ENCODE measurements at regions of chr18 and their contacts with region 1.

Region 1: DNA sequence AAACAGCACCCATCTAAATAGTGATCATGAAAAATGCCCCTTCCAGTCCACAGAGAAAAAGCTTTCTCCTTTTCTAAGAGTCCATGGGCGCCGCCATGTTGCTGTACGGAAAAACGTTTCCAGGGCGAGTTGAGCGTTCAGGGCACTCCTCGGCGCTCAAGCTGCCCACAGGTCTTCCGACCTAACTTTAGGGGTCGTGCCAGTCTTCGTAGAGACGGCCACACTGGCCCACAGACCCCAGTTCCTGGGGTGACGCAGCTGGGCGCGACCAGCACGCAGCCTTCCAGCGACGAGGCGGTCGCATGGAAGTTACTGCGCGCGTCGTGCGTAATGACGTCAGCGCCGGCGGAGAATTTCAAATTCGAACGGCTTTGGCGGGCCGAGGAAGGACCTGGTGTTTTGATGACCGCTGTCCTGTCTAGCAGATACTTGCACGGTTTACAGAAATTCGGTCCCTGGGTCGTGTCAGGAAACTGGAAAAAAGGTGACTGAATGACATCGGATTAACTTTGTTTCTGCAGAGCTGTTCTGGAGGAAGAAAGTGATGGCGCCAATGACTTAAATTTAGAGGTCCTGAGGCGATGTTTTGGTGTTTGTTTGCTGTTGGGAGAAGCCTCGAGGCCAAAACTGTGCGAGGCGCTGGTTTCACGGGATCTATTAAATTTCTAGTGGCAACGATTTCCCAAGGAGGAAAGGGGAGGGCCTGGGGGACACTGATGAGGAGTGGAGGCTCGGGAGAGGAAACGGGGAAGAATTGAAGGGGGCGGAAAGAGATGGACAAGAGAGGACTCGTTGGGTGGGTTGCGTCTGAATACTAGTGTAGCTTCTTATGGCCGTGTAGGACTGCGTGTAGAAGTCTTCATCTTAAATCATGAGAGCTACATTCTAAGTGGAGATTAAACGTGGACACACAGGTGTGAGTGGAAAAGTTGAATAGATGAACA is at the starts of genes METTL4 and NDC80:
- DNase-seq: peak; percentile 90
- H3K4me3 Mint-ChIP-seq: peak within 1 kb of the TSS; percentile 96
- H3K27ac Mint-ChIP-seq: peak within 1 kb of the TSS; percentile 95
- H3K4me1 Mint-ChIP-seq: peaks cover 51% of the 10 kb centered on the region
- H3K27me3 Mint-ChIP-seq: no peaks in the 10 kb centered on the region
- total RNA-seq, gene METTL4: 19.6 to 23.0 TPM
- total RNA-seq, gene NDC80: 79.3 to 83.1 TPM

Region 2: DNA sequence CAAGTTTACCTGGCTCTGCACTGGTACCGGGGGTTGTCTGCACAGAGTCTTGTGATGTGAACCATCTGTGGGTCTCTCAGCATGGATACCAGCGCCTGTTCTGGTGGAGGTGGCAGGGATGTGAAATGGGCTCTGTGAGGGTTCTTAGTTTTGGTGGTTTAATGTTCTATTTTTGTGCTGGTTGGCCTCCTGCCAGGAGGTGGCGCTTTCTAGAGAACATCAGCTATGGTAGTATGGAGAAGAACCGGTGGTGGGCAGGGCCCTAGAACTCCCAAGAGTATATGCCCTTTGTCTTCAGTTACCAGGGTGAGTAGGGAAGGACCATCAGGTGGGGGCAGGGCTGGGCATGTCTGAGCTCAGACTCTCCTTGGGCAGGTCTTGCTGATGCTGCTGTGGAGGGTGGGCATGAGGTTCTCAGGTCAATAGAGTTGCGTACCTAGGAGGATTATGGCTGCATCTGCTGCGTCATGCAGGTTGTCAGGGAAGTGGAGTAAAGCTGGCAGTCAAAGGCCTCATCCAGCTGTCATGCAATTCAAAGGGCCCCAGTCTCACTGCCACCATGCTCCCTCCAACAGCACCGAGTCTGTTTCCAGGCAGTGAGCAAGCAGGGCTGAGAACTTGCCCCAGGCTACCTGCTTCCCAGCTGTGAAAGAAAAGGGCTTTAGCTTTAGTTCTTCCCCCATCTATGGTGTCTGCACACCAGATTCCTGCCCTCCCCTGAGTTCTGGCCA is 278.2 kb before region 1 on chr18:
- CTCF ChIA-PET with region 1: no interaction called
- POLR2A ChIA-PET with region 1: no interaction called
- intact Hi-C with region 1: no loop called
- DNase-seq: peak; percentile 11
- H3K4me3 Mint-ChIP-seq: no peak overlapping the region
- H3K27ac Mint-ChIP-seq: no peak overlapping the region
- H3K4me1 Mint-ChIP-seq: no peaks in the 10 kb centered on the region
- H3K27me3 Mint-ChIP-seq: peaks cover 21% of the 10 kb centered on the region

Region 3: DNA sequence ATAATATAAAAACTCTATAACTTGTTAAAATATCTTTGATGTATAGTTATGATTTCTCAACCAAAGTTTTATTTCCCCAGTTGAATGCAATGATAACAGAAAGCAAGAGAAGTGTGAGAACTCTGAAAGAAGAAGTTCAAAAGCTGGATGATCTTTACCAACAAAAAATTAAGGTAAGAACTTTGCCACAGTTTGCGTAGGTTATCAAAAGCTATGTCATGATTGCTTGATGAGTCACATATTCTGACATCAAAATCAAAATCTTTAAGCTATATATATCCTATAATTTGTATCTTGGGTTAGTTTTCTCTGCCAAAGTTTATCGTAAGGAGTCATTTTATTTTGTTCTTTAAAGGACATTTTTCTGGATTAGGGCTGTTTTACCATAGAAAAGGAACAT is 34.9 kb after region 1 on chr18:
- CTCF ChIA-PET with region 1: no interaction called
- POLR2A ChIA-PET with region 1: interaction called, 3 read pairs
- intact Hi-C with region 1: loop called (anchors 1 kb)
- DNase-seq: no peak
- H3K4me3 Mint-ChIP-seq: peak overlapping the region; percentile 33
- H3K27ac Mint-ChIP-seq: peak overlapping the region; percentile 82
- H3K4me1 Mint-ChIP-seq: peaks cover 40% of the 10 kb centered on the region
- H3K27me3 Mint-ChIP-seq: no peaks in the 10 kb centered on the region

Region 4: GRCh38 chr18:2627821-2628276 is 56.4 kb after region 1 on chr18:
- CTCF ChIA-PET with region 1: no interaction called
- POLR2A ChIA-PET with region 1: no interaction called
- intact Hi-C with region 1: loop called (anchors 1 kb)
- DNase-seq: peak; percentile 50
- H3K4me3 Mint-ChIP-seq: no peak overlapping the region
- H3K27ac Mint-ChIP-seq: peak overlapping the region; percentile 42
- H3K4me1 Mint-ChIP-seq: peaks cover 24% of the 10 kb centered on the region
- H3K27me3 Mint-ChIP-seq: no peaks in the 10 kb centered on the region

Region 5: DNA sequence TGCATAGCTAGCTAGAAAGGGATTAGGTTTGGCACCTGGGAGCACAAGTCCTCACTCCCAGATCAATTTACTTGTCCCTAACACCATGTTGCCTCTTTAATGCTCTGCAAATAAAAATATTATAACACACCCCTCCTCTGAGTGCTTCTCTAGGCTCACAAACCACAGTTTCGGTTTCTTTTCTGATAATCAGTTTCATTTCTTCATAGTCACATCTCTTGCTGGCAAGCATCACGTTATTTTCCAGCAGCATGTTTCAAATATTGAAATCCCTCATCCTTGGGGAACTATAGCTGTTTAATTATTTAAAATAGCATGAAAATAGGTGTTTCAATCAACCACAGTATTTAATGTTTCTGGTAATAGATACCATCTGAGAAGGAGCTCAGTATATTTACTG is 70.2 kb after region 1 on chr18:
- CTCF ChIA-PET with region 1: interaction called, 9 read pairs
- POLR2A ChIA-PET with region 1: interaction called, 3 read pairs
- intact Hi-C with region 1: loop called (anchors 1 kb)
- DNase-seq: no peak
- H3K4me3 Mint-ChIP-seq: peak overlapping the region; percentile 57
- H3K27ac Mint-ChIP-seq: peak overlapping the region; percentile 58
- H3K4me1 Mint-ChIP-seq: peaks cover 52% of the 10 kb centered on the region
- H3K27me3 Mint-ChIP-seq: no peaks in the 10 kb centered on the region

Region 6: DNA sequence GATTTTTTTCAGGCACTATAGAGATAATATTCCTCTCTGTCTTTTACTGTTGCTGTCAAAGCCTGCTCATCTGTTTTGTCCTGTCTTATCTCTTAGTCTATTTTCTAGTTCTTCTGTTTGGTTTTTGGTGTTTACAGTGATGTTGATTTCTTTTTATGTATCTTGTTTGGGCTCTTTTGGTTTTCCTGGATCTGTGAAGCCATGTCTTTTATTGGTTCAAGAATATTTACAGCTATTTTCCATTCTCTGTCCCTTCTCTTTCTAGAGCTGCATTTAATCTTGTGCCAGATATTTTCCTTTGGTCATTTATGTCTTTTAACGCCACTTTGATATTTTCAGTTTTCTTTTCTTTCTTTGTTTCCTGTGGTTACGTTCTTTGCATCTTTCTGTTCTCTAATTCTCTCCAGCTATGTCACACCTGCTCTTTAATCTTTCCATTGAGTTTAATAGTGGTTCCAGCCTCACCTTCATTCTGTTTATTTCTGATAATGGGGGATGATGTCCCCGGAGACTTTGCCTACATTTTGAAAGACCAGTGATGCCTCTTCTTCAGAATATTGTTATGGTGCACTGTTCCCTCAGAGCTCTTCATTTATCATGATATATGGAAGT is 116.0 kb after region 1 on chr18:
- CTCF ChIA-PET with region 1: no interaction called
- POLR2A ChIA-PET with region 1: no interaction called
- intact Hi-C with region 1: loop called (anchors 10 kb)
- DNase-seq: no peak
- H3K4me3 Mint-ChIP-seq: peak overlapping the region; percentile 7
- H3K27ac Mint-ChIP-seq: peak overlapping the region; percentile 66
- H3K4me1 Mint-ChIP-seq: peaks cover 69% of the 10 kb centered on the region
- H3K27me3 Mint-ChIP-seq: no peaks in the 10 kb centered on the region

Region 7: GRCh38 chr18:2881088-2881839 is 309.8 kb after region 1 on chr18:
- CTCF ChIA-PET with region 1: no interaction called
- POLR2A ChIA-PET with region 1: no interaction called
- intact Hi-C with region 1: loop called (anchors 10 kb)
- DNase-seq: peak; percentile 25
- H3K4me3 Mint-ChIP-seq: peak overlapping the region; percentile 73
- H3K27ac Mint-ChIP-seq: peak overlapping the region; percentile 83
- H3K4me1 Mint-ChIP-seq: peaks cover 28% of the 10 kb centered on the region
- H3K27me3 Mint-ChIP-seq: no peaks in the 10 kb centered on the region

Region 8: GRCh38 chr18:2978646-2979045 is 407.2 kb after region 1 on chr18:
- CTCF ChIA-PET with region 1: no interaction called
- POLR2A ChIA-PET with region 1: no interaction called
- intact Hi-C with region 1: loop called (anchors 5 kb)
- DNase-seq: peak; percentile 72
- H3K4me3 Mint-ChIP-seq: peak overlapping the region; percentile 73
- H3K27ac Mint-ChIP-seq: peak overlapping the region; percentile 93
- H3K4me1 Mint-ChIP-seq: peaks cover 85% of the 10 kb centered on the region
- H3K27me3 Mint-ChIP-seq: no peaks in the 10 kb centered on the region

Measured in activated CD4-positive, alpha-beta memory T cell treated with anti-CD3 and anti-CD28 coated beads for 36 hours (primary cell).